ENCODE measurements at regions of chr11 and their contacts with region 1.

Region 1: GRCh38 chr11:33161120-33162005 is at the start of gene CSTF3:
- DNase-seq: peak; percentile 99
- H3K4me3 ChIP-seq: peak within 1 kb of the TSS; percentile 62 to 100 (median 100)
- H3K27ac ChIP-seq: peak within 1 kb of the TSS; percentile 92
- H3K4me1 ChIP-seq: peaks cover 23% of the 10 kb centered on the region
- H3K27me3 ChIP-seq: no peaks in the 10 kb centered on the region
- CTCF ChIP-seq: peak; percentile 18 to 38
- POLR2A ChIP-seq: peak; percentile 95
- total RNA-seq, gene CSTF3: 46.6 and 52.3 TPM in 2 replicates

Region 2: GRCh38 chr11:33257897-33258630 is 96.7 kb after region 1 on chr11:
- CTCF ChIA-PET with region 1: interaction called, 4 read pairs
- POLR2A ChIA-PET with region 1: no interaction called
- dilution Hi-C with region 1: no loop called
- intact Hi-C with region 1: loop called (anchors 1 kb)
- DNase-seq: peak; percentile 82
- H3K4me3 ChIP-seq: peak overlapping the region; percentile 59 to 93 (median 88)
- H3K27ac ChIP-seq: peak overlapping the region; percentile 98
- H3K4me1 ChIP-seq: peaks cover 18% of the 10 kb centered on the region
- H3K27me3 ChIP-seq: no peaks in the 10 kb centered on the region
- CTCF ChIP-seq: peak; percentile 7 to 29
- POLR2A ChIP-seq: no peak

Region 3: GRCh38 chr11:33329705-33330329 is 168.5 kb after region 1 on chr11:
- CTCF ChIA-PET with region 1: interaction called, 75 read pairs
- POLR2A ChIA-PET with region 1: no interaction called
- dilution Hi-C with region 1: no loop called
- intact Hi-C with region 1: loop called (anchors 1 kb)
- DNase-seq: peak; percentile 75
- H3K4me3 ChIP-seq: no peak overlapping the region
- H3K27ac ChIP-seq: no peak overlapping the region
- H3K4me1 ChIP-seq: no peaks in the 10 kb centered on the region
- H3K27me3 ChIP-seq: no peaks in the 10 kb centered on the region
- CTCF ChIP-seq: peak; percentile 45 to 61
- POLR2A ChIP-seq: no peak

Region 4: DNA sequence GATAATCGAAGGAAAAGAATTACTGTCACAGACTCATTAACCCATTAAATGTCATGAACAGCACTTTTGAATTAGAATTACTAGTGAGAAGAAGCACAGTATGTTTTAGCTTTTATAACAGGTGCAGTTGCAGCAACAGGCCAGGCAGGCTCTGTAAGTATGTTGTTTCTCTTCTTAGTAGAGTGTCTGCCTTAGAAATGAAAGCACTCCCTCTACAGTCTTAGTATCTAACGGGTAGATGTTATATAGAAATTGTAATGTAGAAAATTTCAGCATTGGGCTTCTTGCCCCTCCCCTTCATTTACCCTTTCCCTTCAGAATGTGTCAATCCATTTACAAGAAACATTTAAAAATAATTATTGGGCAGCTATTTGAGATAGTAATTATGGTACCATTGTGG is 183.2 kb after region 1 on chr11:
- CTCF ChIA-PET with region 1: interaction called, 18 read pairs
- POLR2A ChIA-PET with region 1: no interaction called
- dilution Hi-C with region 1: no loop called
- intact Hi-C with region 1: no loop called
- DNase-seq: no peak
- H3K4me3 ChIP-seq: no peak overlapping the region
- H3K27ac ChIP-seq: no peak overlapping the region
- H3K4me1 ChIP-seq: no peaks in the 10 kb centered on the region
- H3K27me3 ChIP-seq: no peaks in the 10 kb centered on the region
- CTCF ChIP-seq: no peak
- POLR2A ChIP-seq: no peak

Region 5: GRCh38 chr11:33682446-33682845 is 521.1 kb after region 1 on chr11:
- CTCF ChIA-PET with region 1: interaction called, 25 read pairs
- POLR2A ChIA-PET with region 1: no interaction called
- dilution Hi-C with region 1: no loop called
- intact Hi-C with region 1: no loop called
- DNase-seq: no peak
- H3K4me3 ChIP-seq: no peak overlapping the region
- H3K27ac ChIP-seq: no peak overlapping the region
- H3K4me1 ChIP-seq: no peaks in the 10 kb centered on the region
- H3K27me3 ChIP-seq: no peaks in the 10 kb centered on the region
- CTCF ChIP-seq: no peak
- POLR2A ChIP-seq: no peak